Activated CD4-positive, alpha-beta T cell treated with anti-CD3 and anti-CD28 coated beads, Interleukin-2, amount 10 ng/mL, durations not matched to agents 24 days and 14 days (primary cell): ENCODE measurements at regions of chr12 and their contacts with region 1.

Region 1: GRCh38 chr12:94326727-94327126 is 132.9 kb downstream of the CEP83 start:
- DNase-seq: no peak
- H3K4me3 Mint-ChIP-seq: no peak overlapping the region
- H3K27ac Mint-ChIP-seq: peak overlapping the region; percentile 65
- H3K4me1 Mint-ChIP-seq: peaks cover 24% of the 10 kb centered on the region
- H3K27me3 Mint-ChIP-seq: no peaks in the 10 kb centered on the region

Region 2: DNA sequence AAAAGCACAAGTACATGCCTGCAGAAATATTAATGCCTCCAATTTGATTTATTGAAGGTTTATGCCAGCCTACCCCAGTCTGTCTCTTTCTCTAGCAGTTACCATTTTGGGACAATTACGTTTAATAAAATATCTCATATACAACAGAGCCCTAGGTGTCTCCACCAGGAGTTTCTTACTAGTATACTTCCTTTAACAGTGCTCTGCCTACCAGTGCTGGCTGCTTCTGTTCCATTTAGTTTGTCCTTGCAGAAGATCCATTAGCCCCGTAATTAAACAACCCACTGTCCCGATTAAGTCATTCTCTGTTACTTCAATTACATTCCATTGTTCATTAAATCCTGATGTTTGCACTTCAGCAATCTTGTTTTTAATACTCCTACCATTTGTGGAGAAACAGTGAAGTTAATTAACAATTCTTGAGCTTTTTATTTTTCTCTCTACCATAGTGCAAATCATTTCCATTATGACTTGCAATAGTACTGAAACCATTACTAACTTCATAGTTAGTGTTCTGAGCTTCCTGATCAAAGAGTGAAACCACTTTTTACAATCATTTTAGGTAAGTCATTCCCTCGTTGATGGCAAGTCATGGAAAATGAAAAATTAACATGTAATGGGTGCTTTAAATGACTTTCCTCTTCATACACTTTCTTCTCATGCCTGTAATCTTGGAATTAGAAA is 57.3 kb before region 1 on chr12:
- intact Hi-C with region 1: loop called (anchors 1 kb)
- DNase-seq: no peak
- H3K4me3 Mint-ChIP-seq: peak overlapping the region; percentile 6
- H3K27ac Mint-ChIP-seq: peak overlapping the region; percentile 65
- H3K4me1 Mint-ChIP-seq: peaks cover 45% of the 10 kb centered on the region
- H3K27me3 Mint-ChIP-seq: no peaks in the 10 kb centered on the region

Region 3: GRCh38 chr12:94372461-94372860 is 45.7 kb after region 1 on chr12:
- intact Hi-C with region 1: loop called (anchors 1 kb)
- DNase-seq: no peak
- H3K4me3 Mint-ChIP-seq: peak overlapping the region; percentile 35
- H3K27ac Mint-ChIP-seq: peak overlapping the region; percentile 85
- H3K4me1 Mint-ChIP-seq: peaks cover 23% of the 10 kb centered on the region
- H3K27me3 Mint-ChIP-seq: no peaks in the 10 kb centered on the region

Region 4: DNA sequence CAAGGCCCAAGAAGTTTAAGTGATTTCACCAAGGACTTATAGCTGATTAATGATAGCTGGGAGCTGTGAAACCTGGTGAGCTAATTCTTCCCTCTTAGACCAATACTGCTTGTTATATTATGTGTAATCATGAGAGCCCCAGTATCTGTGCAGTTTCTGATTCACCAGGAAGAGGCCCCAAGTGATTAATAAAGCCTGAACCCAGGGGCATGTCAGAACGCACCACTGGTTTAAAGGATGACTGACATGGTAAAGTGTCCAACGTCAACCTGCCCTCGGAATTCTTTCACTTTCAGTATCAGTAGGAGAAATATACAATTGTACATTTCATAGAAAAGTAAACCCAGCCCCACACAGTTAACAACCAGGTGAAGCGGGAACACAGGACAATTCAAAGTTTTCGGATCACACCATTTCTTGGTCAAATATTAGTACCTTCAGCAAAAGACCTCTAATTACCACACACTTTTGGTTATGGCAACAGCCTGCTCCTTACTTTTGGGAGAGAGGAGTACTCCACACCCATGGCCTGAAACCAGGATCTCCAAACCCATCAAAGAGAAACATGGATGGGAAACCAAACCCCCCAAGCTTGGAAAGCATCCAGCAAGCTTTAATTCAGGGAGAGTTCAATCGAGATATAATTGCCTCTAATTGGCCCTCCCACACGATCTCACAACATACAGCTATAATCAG is 295.1 kb after region 1 on chr12:
- intact Hi-C with region 1: loop called (anchors 5 kb)
- DNase-seq: peak; percentile 82
- H3K4me3 Mint-ChIP-seq: peak overlapping the region; percentile 56
- H3K27ac Mint-ChIP-seq: peak overlapping the region; percentile 64
- H3K4me1 Mint-ChIP-seq: peaks cover 13% of the 10 kb centered on the region
- H3K27me3 Mint-ChIP-seq: peaks cover 2% of the 10 kb centered on the region